PC-3 (cell line): ENCODE measurements at regions of chr7 and their contacts with region 1.

Region 1: DNA sequence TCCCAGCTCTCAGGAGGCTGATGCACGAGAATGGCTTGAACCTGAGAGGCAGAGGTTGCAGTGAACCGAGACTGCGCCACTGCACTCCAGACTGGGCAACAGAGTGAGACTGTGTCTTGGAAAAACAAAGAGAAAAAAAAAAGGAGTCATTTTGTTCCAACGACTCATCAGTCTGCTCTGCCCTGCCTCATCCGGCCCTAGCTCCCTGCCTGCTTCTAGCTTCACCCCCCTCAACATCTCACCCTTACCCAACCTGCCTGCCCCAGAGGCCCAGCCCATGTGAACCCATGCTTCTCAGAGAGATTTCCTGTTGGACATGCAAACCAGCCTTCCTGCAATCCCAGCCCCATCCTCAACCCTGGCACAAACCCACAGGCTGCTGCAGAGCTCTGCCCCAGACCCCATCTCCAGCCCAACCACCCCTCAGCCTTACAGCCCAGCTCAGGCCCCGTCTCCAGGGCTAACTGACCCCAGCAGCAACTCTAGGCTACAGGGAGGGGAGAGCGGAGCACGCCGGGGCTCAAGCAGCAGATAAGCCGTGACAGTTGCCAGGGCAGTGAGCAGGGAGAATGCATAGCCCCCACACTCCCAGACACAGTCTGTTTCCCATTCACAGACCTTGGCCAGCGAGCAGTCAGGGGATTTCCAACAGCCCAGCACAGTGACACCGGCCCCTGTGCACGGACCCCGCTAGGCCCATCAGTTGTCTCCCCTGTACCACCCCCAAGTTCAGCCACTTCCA is 86.0 kb upstream of the KCTD7 start:
- DNase-seq: peak; percentile 37
- ATAC-seq: peak; percentile 91
- H3K4me3 ChIP-seq: no peak overlapping the region
- H3K27ac ChIP-seq: no peak overlapping the region
- H3K4me1 ChIP-seq: no peaks in the 10 kb centered on the region; the same call in 1 of the 2 replicates
- H3K27me3 ChIP-seq: no peaks in the 10 kb centered on the region
- CTCF ChIP-seq: no peak

Region 2: GRCh38 chr7:67018940-67019339 is 476.2 kb after region 1 on chr7:
- CTCF ChIA-PET with region 1: no interaction called
- POLR2A ChIA-PET with region 1: interaction called, 10 read pairs
- intact Hi-C with region 1: no loop called
- DNase-seq: no peak
- ATAC-seq: 0 out of 2 replicates have a peak, but pooled peaks have one; percentile 8
- H3K4me3 ChIP-seq: no peak overlapping the region
- H3K27ac ChIP-seq: peak overlapping the region; percentile 39
- H3K4me1 ChIP-seq: peaks cover 13% of the 10 kb centered on the region; the same call in 1 of the 2 replicates
- H3K27me3 ChIP-seq: no peaks in the 10 kb centered on the region
- CTCF ChIP-seq: no peak